WTC11 (cell line): ENCODE measurements at regions of chr11 and their contacts with region 1.

Region 1: DNA sequence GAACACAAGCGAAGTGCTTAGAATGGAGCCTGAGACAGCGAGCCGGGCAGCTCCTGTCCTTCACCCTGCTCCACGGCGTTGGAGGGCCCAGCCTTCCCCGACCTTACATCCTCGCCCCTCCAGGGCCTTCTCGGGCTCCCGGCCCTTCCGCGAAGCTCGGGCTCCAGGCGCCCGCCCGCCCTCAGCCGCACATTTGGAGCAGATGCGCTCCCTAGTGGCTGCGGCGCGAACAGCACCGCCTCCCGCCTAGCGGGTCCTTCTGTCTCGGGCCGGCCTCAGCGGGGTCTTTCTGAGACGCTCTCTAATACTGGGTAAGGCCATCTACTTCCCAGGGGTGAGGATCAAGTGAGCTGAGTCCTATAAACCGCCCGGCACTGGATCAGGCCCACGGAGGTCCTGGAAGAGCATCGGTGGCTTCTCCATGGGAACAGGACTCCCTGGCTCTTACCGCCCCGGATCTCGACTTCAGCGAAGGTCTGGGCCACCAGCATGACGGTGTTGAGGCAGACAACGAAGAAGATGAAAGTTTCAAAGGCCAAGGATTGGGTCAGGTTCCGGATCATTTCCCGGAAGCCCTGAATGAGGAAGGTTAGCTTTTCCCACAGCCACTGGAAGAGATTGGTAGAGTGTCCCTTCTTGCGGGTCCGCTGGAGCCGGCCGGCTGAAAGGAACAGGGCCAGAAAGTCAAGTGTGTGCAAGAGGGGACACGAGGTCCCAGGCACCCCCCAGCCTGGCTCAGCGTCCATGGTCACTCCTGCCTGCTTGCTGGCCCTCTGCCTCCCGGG is 3.7 kb downstream of the CATSPER1 start:
- DNase-seq: peak; percentile 92
- ATAC-seq: peak; percentile 96
- H3K4me3 Mint-ChIP-seq: peak overlapping the region; percentile 50
- H3K27ac Mint-ChIP-seq: no peak overlapping the region; the same call in 1 of the 2 replicates
- H3K4me1 Mint-ChIP-seq: no peaks in the 10 kb centered on the region
- H3K27me3 Mint-ChIP-seq: peaks cover 29% of the 10 kb centered on the region
- CTCF ChIP-seq: peak; percentile 95

Region 2: DNA sequence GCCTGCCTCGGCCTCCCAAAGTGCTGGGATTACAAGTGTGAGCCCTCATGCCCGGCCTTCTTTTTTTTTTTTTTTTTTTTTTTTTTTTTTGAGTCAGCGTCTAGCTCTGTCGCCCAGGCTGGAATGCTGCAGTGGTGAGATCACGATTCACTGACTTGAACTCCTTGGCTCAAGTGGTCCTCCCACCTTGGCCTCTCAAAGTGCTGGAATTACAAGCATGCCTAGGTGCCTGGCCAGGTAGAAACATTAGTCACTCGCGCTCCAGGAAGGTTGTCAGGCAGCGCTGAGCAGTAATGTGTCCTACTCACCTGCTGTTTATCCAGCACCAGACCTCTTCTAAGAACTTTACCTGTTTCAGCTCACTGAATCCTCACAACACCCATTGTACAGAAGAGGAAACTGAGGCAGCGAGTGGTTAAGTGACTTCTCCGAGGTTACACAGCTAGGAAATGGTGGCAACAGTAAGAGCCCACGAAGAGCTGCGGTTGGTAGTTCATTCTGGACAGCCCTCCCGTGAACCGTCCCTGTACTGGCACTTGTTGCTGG is 11.3 kb before region 1 on chr11:
- CTCF ChIA-PET with region 1: interaction called, 42 read pairs
- POLR2A ChIA-PET with region 1: no interaction called
- DNase-seq: no peak
- ATAC-seq: no peak
- H3K4me3 Mint-ChIP-seq: peak overlapping the region; percentile 30; the same call in 1 of the 2 replicates
- H3K27ac Mint-ChIP-seq: no peak overlapping the region
- H3K4me1 Mint-ChIP-seq: peaks cover 8% of the 10 kb centered on the region; the same call in 1 of the 2 replicates
- H3K27me3 Mint-ChIP-seq: peaks cover 22% of the 10 kb centered on the region
- CTCF ChIP-seq: no peak

Region 3: DNA sequence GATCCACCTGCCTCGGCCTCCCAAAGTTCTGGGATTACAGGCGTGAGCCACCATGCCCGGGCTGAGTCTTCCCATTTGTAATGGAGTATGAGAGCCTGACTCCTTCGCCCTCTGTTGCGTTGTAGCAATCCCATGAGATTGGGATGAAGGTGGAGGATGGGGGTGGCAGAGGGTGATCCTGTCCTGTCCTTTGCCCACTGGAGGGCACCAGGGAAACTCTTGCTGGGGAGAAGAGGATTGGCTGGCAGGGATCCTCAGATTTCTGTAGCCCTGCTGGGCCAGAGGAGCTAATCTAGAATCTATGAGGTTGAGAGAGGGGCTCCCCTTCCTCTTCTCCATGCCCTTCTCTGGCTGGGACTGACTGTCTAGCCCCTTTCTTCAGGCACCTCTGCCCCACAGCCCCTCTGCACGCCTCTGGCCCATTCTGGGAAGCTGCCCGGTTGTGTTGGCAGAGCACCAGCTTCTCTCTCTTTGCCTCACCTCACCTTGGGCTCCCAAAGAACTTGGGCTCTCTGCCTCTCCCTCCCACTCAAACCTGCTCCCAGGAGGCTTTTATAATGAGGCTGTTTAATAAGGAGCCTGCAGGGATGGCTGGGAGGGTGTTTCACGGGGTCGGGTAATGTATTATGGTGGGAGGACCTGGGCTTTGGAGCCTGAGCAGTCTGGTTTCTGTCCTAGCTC is 13.2 kb after region 1 on chr11:
- CTCF ChIA-PET with region 1: interaction called, 10 read pairs
- POLR2A ChIA-PET with region 1: no interaction called
- DNase-seq: no peak
- ATAC-seq: no peak
- H3K4me3 Mint-ChIP-seq: no peak overlapping the region
- H3K27ac Mint-ChIP-seq: no peak overlapping the region
- H3K4me1 Mint-ChIP-seq: no peaks in the 10 kb centered on the region
- H3K27me3 Mint-ChIP-seq: peaks cover 22% of the 10 kb centered on the region
- CTCF ChIP-seq: no peak

Region 4: DNA sequence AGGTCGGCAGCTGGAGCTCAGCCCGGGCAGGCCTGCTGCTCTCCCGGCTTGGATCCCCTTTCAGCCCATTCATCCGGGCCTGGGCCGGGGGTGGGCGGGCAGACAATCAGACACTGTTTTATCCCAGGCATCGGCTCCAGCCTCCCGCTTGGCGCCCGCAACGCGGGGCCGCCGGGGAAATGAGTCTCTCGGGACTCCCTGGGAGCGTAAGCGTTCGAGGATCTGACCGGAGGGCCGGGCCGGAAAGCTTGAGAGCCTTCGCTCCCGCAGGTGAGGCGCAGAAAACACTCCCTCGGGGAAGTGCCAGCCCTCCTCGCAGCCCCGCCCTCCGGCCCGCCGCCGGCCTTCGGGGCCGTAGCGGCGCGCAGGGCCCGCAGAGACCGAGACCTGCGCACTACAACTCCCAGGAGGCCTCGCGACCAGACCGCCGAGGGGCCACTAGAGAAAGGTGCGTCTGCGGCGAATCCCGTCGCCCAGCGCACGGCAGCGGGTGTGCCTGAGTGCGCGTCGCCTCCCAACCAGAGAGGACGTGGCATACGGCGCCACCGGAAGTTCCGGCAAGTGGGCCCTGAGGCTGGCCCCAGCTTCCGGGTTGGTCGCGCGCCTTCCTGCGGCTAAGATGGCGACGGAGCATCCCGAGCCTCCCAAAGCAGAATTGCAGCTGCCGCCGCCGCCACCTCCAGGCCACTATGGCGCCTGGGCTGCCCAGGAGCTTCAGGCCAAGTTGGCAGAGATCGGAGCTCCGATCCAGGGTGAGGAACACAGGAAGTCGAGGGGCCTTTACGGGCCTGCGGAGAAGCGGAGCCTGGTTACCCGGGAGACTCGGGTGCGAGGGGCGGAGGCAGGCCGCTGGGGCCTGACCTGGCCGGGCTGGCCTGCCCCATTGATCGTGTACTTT is 29.4 kb after region 1 on chr11 and contains the start of gene SF3B2:
- CTCF ChIA-PET with region 1: interaction called, 11 read pairs
- POLR2A ChIA-PET with region 1: no interaction called
- DNase-seq: peak; percentile 97
- ATAC-seq: peak; percentile 95
- H3K4me3 Mint-ChIP-seq: peak within 1 kb of the TSS; percentile 100
- H3K27ac Mint-ChIP-seq: peak within 1 kb of the TSS; percentile 98
- H3K4me1 Mint-ChIP-seq: peaks cover 35% of the 10 kb centered on the region
- H3K27me3 Mint-ChIP-seq: no peaks in the 10 kb centered on the region
- CTCF ChIP-seq: no peak
- total RNA-seq, gene SF3B2: 235 to 295 TPM (median 251 TPM) in 3 replicates